Panc1 (cell line): ENCODE measurements at regions of chr6 and their contacts with region 1.

Region 1: DNA sequence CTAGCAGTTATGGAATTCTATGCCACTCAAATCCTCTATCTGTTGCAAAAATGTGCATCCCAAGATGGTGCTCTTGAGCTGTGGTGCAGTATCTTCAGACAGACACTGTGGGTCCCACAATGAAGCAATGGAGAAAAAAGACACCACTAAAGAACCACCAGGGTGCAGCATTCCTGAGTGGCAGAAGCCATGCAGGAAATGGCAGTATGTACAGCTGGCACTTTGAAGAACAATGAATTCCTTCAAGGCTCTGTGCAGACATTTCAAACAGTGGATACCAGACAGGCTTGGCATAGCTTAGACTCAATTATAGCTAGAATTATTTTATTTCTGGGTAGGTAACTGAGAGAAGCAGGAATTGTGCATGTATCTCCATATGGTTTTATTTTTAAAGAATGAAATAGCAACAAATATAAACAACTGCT is 24.0 kb upstream of the HDAC2 start:
- DNase-seq: peak; percentile 92
- ATAC-seq: peak; percentile 94
- H3K4me3 ChIP-seq: no peak overlapping the region
- H3K27ac ChIP-seq: no peak overlapping the region; the same call in 1 of the 2 replicates
- H3K4me1 ChIP-seq: 0 out of 2 replicates have a peak, but pooled peaks cover 8% of the 10 kb centered on the region
- H3K27me3 ChIP-seq: no peaks in the 10 kb centered on the region
- CTCF ChIP-seq: peak; percentile 90

Region 2: DNA sequence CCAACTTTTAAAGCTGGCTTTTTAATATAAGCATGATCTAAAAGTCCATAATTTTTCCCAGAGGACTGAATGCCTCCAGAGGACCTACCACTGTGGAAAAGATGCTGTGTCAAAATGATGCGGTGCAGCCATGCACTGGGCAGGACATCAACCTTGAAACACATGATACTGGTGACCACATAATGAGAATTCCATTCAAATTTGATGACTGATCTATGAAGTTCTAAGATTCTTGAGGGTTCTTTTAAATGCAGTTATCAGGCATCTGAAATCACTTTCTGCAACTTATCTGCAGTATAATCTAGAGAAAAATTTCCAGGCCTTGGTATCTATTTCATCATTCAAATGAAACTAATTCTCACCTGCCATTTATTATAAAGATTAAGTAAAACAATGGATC is 152.8 kb before region 1 on chr6:
- CTCF ChIA-PET with region 1: no interaction called
- POLR2A ChIA-PET with region 1: no interaction called
- in situ Hi-C with region 1: no loop called
- intact Hi-C with region 1: no loop called
- DNase-seq: no peak
- ATAC-seq: no peak
- H3K4me3 ChIP-seq: no peak overlapping the region
- H3K27ac ChIP-seq: no peak overlapping the region
- H3K4me1 ChIP-seq: no peaks in the 10 kb centered on the region
- H3K27me3 ChIP-seq: no peaks in the 10 kb centered on the region
- CTCF ChIP-seq: no peak

Region 3: DNA sequence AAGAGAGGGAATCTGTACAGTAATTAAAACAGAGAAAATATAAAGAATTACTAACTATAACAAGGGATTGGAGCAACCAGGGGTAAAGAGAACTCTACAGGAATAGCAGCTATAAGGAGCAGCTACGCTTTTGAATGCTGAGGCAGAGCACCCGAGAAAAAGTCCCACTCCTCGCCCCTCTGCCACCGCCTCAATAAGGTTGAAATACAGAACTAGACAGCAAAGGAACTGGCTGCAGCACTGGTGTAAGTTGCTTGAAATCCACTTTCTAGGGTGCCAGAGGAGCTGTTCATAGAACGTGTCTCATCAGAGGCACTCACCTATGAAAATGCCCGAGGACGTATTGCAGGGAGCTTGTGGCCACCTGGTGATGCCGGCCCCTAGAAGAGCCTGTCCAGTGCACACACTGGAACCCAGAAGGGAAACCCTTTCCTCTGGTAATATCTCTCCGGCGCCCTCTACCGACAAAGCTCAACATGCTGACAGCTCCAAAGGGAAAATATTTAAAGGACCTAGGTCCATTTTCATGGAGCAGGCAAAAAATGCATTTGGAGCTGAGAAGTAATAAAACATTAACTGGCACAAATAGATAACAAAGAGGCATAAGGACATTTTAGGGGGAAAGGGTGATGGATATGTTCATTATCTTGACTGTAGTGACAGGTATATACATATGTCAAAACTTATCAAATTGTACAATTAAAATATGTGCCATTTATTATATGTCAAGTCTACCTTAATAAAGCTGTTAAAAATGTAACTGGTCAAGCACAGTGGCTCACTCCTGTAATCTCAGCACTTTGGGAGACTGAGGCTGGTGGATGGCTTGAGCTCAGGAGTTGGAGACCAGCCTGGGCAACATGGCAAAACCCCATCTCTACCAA is 113.4 kb after region 1 on chr6:
- CTCF ChIA-PET with region 1: interaction called, 7 read pairs
- POLR2A ChIA-PET with region 1: no interaction called
- in situ Hi-C with region 1: no loop called
- intact Hi-C with region 1: loop called (anchors 2 kb)
- DNase-seq: peak; percentile 33
- ATAC-seq: peak; percentile 92
- H3K4me3 ChIP-seq: no peak overlapping the region
- H3K27ac ChIP-seq: no peak overlapping the region
- H3K4me1 ChIP-seq: no peaks in the 10 kb centered on the region
- H3K27me3 ChIP-seq: peaks cover 7% of the 10 kb centered on the region; the same call in 1 of the 2 replicates
- CTCF ChIP-seq: peak; percentile 91

Region 4: DNA sequence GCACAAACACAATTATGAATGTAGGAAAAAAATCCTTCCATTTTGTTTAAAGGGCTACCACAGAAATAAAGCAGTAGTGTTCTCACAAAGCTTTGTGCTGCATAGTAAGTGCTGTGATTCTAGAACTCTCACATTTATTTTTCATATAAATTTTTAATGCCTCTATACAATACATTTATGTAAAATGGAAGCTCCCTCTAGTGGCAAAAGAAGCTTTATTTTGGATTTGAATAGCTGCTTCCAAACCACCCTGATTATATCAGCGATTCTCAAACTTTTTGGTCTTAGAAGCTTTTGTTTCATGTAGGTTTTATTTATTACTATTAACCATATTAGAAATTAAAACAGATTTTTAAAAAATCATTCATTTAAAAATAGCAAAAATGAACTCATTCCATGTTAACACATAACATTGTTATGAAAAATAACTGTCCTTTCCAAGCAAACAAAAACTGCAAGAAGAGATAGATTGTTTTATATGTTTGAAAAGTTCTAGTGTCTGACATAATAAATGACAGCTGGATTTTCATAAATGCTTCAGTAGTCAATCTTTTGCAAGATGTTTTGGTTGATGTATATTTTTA is 309.5 kb after region 1 on chr6:
- CTCF ChIA-PET with region 1: interaction called, 12 read pairs
- POLR2A ChIA-PET with region 1: no interaction called
- in situ Hi-C with region 1: no loop called
- intact Hi-C with region 1: loop called (anchors 5 kb)
- DNase-seq: peak; percentile 13
- ATAC-seq: no peak
- H3K4me3 ChIP-seq: no peak overlapping the region
- H3K27ac ChIP-seq: no peak overlapping the region
- H3K4me1 ChIP-seq: no peaks in the 10 kb centered on the region
- H3K27me3 ChIP-seq: no peaks in the 10 kb centered on the region
- CTCF ChIP-seq: peak; percentile 75; the same call in 1 of the 2 replicates

Region 5: DNA sequence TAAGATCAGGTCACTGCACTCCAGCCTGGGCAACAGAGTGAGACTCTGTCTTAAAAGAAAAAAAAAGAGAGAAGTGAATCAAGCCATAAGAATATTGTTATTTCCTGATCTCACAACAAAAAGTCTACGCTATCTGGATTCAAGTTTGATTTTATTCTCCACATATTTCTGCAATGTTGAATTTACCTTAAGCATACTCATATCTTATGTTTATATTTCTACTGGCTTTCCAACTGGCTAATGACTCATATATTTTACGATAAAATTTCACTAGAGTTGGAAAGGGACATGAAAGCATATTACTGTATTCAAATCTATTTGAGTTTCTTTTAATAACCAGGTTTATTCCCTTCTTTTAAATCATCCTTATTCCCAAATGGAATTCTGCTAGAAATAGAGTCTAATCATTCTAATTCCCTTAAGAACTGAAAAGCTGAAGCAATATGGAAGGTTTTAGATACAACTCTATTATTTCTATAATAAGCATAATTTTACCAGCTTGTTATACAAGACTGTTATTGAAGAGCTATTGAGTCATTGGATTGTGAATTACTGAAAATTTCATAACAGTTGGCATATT is 624.8 kb after region 1 on chr6:
- CTCF ChIA-PET with region 1: no interaction called
- POLR2A ChIA-PET with region 1: no interaction called
- in situ Hi-C with region 1: no loop called
- intact Hi-C with region 1: no loop called
- DNase-seq: no peak
- ATAC-seq: no peak
- H3K4me3 ChIP-seq: no peak overlapping the region
- H3K27ac ChIP-seq: no peak overlapping the region
- H3K4me1 ChIP-seq: no peaks in the 10 kb centered on the region
- H3K27me3 ChIP-seq: no peaks in the 10 kb centered on the region
- CTCF ChIP-seq: no peak